Activated naive CD4-positive, alpha-beta T cell treated with anti-CD3 and anti-CD28 coated beads for 36 hours (primary cell): ENCODE measurements at regions of chr6 and their contacts with region 1.

Region 1: DNA sequence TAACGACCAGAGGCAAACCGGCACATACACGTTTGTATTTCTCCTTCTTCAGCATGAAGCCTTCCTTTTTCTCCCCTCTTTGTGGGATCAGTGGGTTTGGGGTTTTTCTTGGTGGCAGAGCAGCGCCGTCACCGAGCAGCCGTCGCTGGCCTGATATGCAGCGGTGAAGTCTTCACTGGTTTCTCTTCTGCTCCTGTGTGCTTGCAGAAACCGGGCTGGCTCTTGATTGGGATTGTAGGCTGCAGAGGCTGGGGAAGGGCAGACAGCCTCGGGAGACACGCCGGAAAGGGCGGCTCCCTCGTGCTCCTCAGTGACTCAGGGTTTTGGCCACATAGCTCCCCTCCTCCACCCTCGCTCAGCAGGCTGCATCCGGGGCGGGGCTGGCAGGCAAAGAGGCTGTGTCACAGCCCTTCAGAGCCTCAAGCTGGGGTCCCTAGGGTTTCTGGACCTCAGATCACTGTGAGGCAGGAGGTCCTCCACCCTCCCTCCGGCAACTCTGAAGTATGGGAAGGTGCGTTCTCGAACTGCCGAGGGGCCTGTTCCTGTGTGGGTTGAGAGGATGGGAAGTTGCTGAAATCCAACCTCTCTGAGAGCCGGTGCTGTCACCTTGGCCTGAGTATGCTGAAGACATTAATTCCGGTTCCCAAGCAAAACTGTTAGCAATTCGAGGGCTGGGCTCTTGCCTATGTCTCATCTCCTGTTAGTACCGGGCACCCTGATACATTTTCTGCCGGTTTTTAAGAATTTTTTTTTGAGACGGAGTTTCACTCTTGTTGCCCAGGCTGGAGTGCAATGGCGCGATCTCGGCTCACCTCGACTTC is 24.2 kb downstream of the NQO2 start:
- DNase-seq: peak; percentile 93
- H3K4me3 Mint-ChIP-seq: peak overlapping the region; percentile 84
- H3K27ac Mint-ChIP-seq: peak overlapping the region; percentile 80
- H3K4me1 Mint-ChIP-seq: peaks cover 57% of the 10 kb centered on the region
- H3K27me3 Mint-ChIP-seq: no peaks in the 10 kb centered on the region

Region 2: GRCh38 chr6:3052481-3053230 is 28.8 kb after region 1 on chr6:
- CTCF ChIA-PET with region 1: interaction called, 4 read pairs
- intact Hi-C with region 1: loop called (anchors 1 kb)
- DNase-seq: no peak
- H3K4me3 Mint-ChIP-seq: peak overlapping the region; percentile 74
- H3K27ac Mint-ChIP-seq: no peak overlapping the region
- H3K4me1 Mint-ChIP-seq: peaks cover 17% of the 10 kb centered on the region
- H3K27me3 Mint-ChIP-seq: no peaks in the 10 kb centered on the region